Head of caudate nucleus (tissue), 42 donors: ENCODE measurements at regions of chr13 and their contacts with region 1.

Region 1: GRCh38 chr13:42110410-42111155 is 62.1 kb downstream of the DGKH start:
- DNase-seq: peak in 8 of 42 donors; percentile 20 to 74 (median 41)

Region 2: GRCh38 chr13:41668130-41668757 is 442.3 kb before region 1 on chr13:
- intact Hi-C with region 1: loop called (anchors 5 kb)
- DNase-seq: peak in 34 of 42 donors; percentile 18 to 85 (median 64)

Region 3: DNA sequence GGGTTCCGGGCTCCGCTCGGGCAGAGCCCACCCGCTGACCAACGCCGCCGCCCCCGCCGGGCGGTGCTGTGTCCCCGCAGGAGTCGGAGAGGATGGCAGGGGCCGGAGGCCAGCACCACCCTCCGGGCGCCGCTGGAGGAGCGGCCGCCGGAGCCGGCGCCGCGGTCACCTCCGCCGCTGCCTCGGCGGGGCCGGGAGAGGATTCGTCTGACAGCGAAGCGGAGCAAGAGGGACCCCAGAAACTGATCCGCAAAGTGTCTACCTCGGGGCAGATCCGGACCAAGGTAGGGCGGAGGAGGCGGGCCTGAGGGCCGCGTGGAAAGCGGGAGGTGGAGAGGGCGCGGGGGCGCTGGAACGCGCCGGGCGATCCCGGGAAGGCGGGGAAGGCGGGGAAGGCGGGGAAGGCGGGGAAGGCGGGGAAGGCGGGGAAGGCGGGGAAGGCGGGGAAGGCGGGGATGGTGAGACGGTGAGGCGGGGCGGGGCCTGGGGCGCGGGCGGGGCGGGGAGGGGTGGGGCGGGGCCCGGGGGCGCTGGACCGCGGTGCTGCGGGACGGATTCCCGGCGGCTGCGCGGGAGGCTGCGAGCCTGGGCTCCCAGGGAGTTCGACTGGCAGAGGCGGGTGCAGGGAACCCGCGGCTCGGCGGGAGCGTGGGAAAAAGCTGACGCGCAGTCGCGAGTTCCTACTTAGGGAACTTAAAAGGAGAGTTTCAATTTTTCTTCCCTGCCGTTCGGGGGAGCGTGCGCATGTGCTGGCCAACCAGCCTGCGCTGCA is 61.7 kb before region 1 on chr13:
- intact Hi-C with region 1: loop called (anchors 5 kb)
- DNase-seq: peak; percentile 50 to 94 (median 86)

Region 4: GRCh38 chr13:42164557-42165125 is 54.1 kb after region 1 on chr13:
- intact Hi-C with region 1: no loop called
- DNase-seq: no peak

Region 5: GRCh38 chr13:42181381-42181953 is 70.9 kb after region 1 on chr13:
- intact Hi-C with region 1: no loop called
- DNase-seq: no peak